GM12878 (cell line): ENCODE measurements at regions of chr5 and their contacts with region 1.

Region 1: DNA sequence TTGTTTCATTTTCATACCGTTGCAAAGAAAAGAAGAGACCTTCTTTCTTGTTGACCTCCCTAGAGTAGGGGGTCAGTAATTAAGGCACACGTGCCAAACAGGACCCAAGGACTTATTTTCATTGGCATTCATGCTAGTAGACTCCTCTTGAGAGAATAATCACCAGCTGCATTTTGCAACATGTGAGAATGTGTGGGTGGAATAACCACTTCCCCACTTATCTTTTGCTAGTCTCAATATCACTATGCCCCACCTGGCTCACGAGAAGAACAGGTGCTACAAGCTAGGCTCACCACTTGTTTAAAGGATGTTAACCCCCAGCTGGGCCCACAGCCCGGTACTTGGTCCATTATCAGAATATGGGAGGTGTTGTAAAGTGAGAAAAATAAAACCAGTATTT is 460.7 kb upstream of the MEF2C start:
- DNase-seq: peak; percentile 97
- ATAC-seq: peak; percentile 86
- H3K4me3 ChIP-seq: no peak overlapping the region
- H3K27ac ChIP-seq: peak overlapping the region; percentile 93
- H3K4me1 ChIP-seq: peaks cover 37% of the 10 kb centered on the region; the same call in 1 of the 2 replicates
- H3K27me3 ChIP-seq: no peaks in the 10 kb centered on the region
- CTCF ChIP-seq: no peak
- EP300 ChIP-seq: peak; percentile 100
- POLR2A ChIP-seq: no peak
- RAD21 ChIP-seq: peak; percentile 17

Region 2: DNA sequence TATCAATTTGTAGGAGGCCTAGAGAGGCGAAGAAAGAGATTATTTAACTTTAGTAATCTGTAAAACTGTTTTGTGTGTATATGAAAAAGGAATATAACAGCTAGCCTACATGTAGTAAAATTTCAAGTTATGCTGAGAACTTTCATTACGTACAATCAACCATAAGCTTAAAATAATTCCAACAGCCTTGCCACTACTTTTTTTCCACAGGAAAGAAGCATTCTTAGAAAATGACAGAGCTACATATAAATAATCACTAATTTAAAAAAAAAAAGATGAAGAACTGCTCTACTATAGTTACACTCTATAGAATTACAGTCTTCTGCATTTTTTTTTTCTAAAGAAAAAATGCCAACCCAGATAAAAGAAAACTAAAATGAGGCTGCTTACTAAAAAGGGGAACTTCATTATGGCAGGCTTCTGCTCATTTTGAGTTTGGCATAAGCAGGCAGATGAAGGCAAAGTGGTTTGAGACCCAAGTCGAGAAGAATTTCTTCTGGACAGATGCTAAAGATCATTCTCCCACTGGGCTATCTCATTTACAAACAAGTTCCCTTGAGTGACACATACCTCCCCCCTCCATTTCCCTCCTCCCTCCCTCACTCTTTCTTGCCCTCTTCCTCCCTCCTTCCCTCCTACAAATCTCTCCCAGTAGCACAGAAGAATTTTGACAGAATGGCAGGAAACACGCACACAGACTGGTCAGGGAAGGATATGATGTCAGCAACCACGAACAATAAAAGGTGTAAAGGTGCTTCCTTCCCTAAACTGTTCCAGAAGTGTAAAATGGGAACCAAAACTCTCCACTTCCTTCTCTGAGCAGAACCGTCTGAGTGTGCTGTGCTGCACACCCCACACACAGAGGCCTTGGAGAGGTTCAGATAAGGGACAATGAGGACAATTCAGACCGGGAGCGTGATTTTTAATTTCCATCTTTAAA is 516.8 kb before region 1 on chr5:
- CTCF ChIA-PET with region 1: no interaction called
- POLR2A ChIA-PET with region 1: no interaction called
- RAD21 ChIA-PET with region 1: interaction called, 3 read pairs
- SMC1A ChIA-PET with region 1: interaction called, 4 read pairs
- in situ Hi-C with region 1: no loop called
- intact Hi-C with region 1: loop called (anchors 2 kb)
- DNase-seq: peak; percentile 98
- ATAC-seq: peak; percentile 63
- H3K4me3 ChIP-seq: peak overlapping the region; percentile 64; the same call in 1 of the 2 replicates
- H3K27ac ChIP-seq: peak overlapping the region; percentile 80
- H3K4me1 ChIP-seq: peaks cover 23% of the 10 kb centered on the region
- H3K27me3 ChIP-seq: no peaks in the 10 kb centered on the region
- CTCF ChIP-seq: no peak
- EP300 ChIP-seq: peak; percentile 95 to 96
- POLR2A ChIP-seq: peak; percentile 52; the same call in 1 of the 2 replicates
- RAD21 ChIP-seq: no peak

Region 3: DNA sequence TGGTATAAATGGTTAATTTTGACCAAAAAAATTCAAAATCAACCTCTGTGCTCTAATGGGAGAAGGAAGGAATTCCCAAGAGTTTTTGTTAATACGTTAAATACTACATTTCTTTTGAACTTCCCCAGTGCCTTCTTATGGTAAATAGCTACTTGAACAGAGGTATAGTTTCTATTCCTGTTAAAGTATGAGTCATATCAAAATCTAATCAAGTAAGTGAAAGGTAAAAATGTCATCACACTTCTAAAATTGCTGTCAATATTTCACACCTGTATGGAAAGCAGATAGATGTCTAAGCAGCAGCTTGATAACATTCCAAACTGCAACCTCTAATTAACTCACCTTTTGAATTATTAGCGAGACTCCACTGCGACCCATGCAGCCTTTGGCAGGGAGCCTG is 246.6 kb before region 1 on chr5:
- CTCF ChIA-PET with region 1: no interaction called
- POLR2A ChIA-PET with region 1: no interaction called
- RAD21 ChIA-PET with region 1: interaction called, 11 read pairs
- SMC1A ChIA-PET with region 1: interaction called, 4 read pairs
- in situ Hi-C with region 1: no loop called
- intact Hi-C with region 1: no loop called
- DNase-seq: peak; percentile 52
- ATAC-seq: peak; percentile 88
- H3K4me3 ChIP-seq: peak overlapping the region; percentile 26; the same call in 1 of the 2 replicates
- H3K27ac ChIP-seq: peak overlapping the region; percentile 52
- H3K4me1 ChIP-seq: peaks cover 12% of the 10 kb centered on the region
- H3K27me3 ChIP-seq: no peaks in the 10 kb centered on the region
- CTCF ChIP-seq: no peak
- EP300 ChIP-seq: peak; percentile 87 to 95
- POLR2A ChIP-seq: no peak
- RAD21 ChIP-seq: no peak

Region 4: DNA sequence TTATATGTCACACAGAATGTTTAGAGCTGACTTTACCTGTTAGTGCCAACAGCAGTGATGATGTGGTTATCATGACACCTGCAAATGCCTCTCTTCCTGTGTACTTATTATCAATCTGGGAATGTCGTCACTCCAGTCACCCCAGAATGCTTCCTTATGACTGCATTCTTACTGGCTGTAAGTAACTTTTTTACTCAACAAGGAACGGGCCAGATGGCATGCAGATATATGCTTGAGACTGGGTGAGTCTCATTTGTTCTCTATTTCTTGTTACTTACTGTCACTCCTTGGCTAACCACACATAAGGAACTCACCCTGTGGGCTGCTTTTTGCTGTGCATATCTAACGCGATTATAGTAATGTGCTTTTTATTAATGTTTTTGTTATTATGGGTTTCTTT is 75.2 kb before region 1 on chr5:
- CTCF ChIA-PET with region 1: interaction called, 4 read pairs
- POLR2A ChIA-PET with region 1: interaction called, 3 read pairs
- RAD21 ChIA-PET with region 1: interaction called, 40 read pairs
- SMC1A ChIA-PET with region 1: interaction called, 49 read pairs
- in situ Hi-C with region 1: no loop called
- intact Hi-C with region 1: loop called (anchors 2 kb)
- DNase-seq: peak; percentile 51
- ATAC-seq: peak; percentile 38
- H3K4me3 ChIP-seq: no peak overlapping the region
- H3K27ac ChIP-seq: peak overlapping the region; percentile 43; the same call in 1 of the 2 replicates
- H3K4me1 ChIP-seq: peaks cover 46% of the 10 kb centered on the region
- H3K27me3 ChIP-seq: no peaks in the 10 kb centered on the region
- CTCF ChIP-seq: no peak
- EP300 ChIP-seq: no peak
- POLR2A ChIP-seq: no peak
- RAD21 ChIP-seq: 0 out of 2 replicates have a peak, but pooled peaks have one; percentile 12

Region 5: DNA sequence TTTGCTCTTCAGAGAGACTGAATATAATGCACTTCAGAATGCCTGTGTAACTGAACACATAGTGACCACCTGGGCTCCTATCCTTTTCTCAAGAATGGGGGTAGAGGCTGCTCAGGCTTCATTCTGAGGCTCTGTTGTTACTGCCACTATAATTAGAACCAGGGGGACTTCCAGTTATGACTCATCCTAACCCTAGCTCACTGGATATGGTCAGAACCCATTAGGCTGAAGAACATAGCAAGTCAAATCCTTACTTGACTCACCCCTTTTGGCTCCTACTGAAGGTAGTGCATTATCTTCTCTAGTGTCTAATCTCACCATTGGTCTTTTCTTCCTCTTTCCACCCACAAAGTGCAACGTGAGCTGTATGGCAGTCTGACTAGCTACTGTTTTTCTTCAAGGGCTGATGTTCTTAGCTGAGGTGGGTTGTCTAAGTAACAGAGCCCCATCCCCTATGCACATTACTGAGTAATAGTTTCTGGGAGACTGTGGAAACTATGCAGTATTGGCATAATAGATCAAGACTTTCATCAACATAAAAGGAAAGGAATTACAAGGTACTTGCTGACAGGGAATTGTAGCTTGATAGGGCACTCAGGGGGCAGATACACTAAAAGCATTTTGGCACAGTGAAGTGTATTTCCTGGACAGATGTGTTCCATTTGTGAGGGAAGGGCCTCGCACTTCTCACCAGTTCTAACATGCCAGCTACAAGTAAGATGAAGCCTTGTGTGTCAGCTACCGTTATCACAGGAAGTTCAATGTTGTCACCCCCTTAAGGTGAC is 29.7 kb before region 1 on chr5:
- CTCF ChIA-PET with region 1: interaction called, 6 read pairs
- POLR2A ChIA-PET with region 1: interaction called, 15 read pairs
- RAD21 ChIA-PET with region 1: interaction called, 101 read pairs
- SMC1A ChIA-PET with region 1: interaction called, 108 read pairs
- in situ Hi-C with region 1: no loop called
- intact Hi-C with region 1: loop called (anchors 1 kb)
- DNase-seq: peak; percentile 99
- ATAC-seq: peak; percentile 96
- H3K4me3 ChIP-seq: no peak overlapping the region
- H3K27ac ChIP-seq: peak overlapping the region; percentile 97
- H3K4me1 ChIP-seq: peaks cover 40% of the 10 kb centered on the region
- H3K27me3 ChIP-seq: no peaks in the 10 kb centered on the region
- CTCF ChIP-seq: no peak
- EP300 ChIP-seq: peak; percentile 95 to 98
- POLR2A ChIP-seq: peak; percentile 36; the same call in 1 of the 2 replicates
- RAD21 ChIP-seq: peak; percentile 40

Region 6: DNA sequence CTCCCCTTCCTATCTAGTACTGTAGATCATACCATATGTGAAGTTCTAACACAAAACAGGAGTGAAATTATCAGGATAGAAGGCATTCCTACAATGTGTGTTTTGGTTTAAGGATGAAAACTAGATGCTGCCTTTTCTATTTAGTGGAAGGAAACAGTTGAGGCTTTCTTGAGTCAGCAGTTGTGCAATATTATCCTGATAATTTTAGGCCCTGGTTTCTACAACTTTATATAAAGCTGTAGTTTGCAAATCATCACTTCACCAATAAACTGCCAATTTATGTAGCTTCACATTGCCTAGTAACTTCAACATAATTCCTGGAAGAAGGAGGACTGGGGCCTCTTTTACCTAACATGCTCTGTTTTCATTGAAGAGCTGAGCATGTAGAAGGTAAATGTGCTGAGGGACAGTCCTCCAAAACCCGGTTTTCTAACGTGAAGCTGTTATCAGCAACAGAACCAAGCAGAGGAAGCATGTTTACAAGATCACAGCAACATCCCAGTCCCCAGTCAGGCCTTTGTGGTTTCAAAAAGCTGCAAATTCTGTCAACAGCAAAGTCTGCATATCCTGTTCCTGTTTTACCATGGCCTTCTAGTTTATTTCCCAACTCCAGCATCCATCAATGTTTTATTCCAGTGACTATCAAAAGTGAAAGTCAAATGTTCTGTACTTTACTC is 52.8 kb after region 1 on chr5:
- CTCF ChIA-PET with region 1: interaction called, 3 read pairs
- POLR2A ChIA-PET with region 1: interaction called, 3 read pairs
- RAD21 ChIA-PET with region 1: interaction called, 11 read pairs
- SMC1A ChIA-PET with region 1: interaction called, 13 read pairs
- in situ Hi-C with region 1: no loop called
- intact Hi-C with region 1: no loop called
- DNase-seq: peak; percentile 57
- ATAC-seq: peak; percentile 79
- H3K4me3 ChIP-seq: peak overlapping the region; percentile 1; the same call in 1 of the 2 replicates
- H3K27ac ChIP-seq: peak overlapping the region; percentile 63
- H3K4me1 ChIP-seq: peaks cover 14% of the 10 kb centered on the region
- H3K27me3 ChIP-seq: no peaks in the 10 kb centered on the region
- CTCF ChIP-seq: no peak
- EP300 ChIP-seq: no peak
- POLR2A ChIP-seq: no peak
- RAD21 ChIP-seq: no peak

Region 7: GRCh38 chr5:89729623-89730301 is 386.1 kb after region 1 on chr5:
- CTCF ChIA-PET with region 1: interaction called, 5 read pairs
- POLR2A ChIA-PET with region 1: no interaction called
- RAD21 ChIA-PET with region 1: interaction called, 19 read pairs
- SMC1A ChIA-PET with region 1: interaction called, 3 read pairs
- in situ Hi-C with region 1: no loop called
- intact Hi-C with region 1: no loop called
- DNase-seq: peak; percentile 34
- ATAC-seq: peak; percentile 76
- H3K4me3 ChIP-seq: no peak overlapping the region
- H3K27ac ChIP-seq: no peak overlapping the region
- H3K4me1 ChIP-seq: peaks cover 7% of the 10 kb centered on the region; the same call in 1 of the 2 replicates
- H3K27me3 ChIP-seq: no peaks in the 10 kb centered on the region
- CTCF ChIP-seq: peak; percentile 26 to 54 (median 27); a peak in 4 of 6 replicates
- EP300 ChIP-seq: no peak
- POLR2A ChIP-seq: no peak
- RAD21 ChIP-seq: peak; percentile 65

Region 8: DNA sequence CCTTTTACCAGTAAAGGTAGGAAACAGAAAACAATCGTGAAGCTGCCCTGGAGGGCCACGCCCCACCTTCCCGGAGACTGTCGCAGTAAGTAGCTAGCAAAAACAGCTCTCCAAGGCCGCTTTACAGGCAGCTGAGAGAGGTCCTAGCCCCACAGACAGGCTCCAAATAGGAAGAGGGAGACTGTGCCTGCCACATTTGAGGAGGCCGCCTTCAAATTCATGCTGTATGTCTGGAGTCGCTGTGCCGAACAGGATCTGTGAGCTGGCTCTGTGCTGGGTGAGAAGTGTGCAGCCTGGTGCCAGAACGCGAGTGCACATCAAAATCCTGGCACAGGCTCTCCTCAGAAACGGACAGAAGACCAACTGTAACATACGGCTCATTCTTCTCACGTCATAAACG is 483.7 kb after region 1 on chr5:
- CTCF ChIA-PET with region 1: no interaction called
- POLR2A ChIA-PET with region 1: no interaction called
- RAD21 ChIA-PET with region 1: no interaction called
- SMC1A ChIA-PET with region 1: no interaction called
- in situ Hi-C with region 1: no loop called
- intact Hi-C with region 1: no loop called
- DNase-seq: no peak
- ATAC-seq: no peak
- H3K4me3 ChIP-seq: no peak overlapping the region
- H3K27ac ChIP-seq: no peak overlapping the region
- H3K4me1 ChIP-seq: no peaks in the 10 kb centered on the region
- H3K27me3 ChIP-seq: no peaks in the 10 kb centered on the region
- CTCF ChIP-seq: no peak
- EP300 ChIP-seq: no peak
- POLR2A ChIP-seq: no peak
- RAD21 ChIP-seq: no peak